ENCODE measurements at regions of chr17 and their contacts with region 1.

Region 1: DNA sequence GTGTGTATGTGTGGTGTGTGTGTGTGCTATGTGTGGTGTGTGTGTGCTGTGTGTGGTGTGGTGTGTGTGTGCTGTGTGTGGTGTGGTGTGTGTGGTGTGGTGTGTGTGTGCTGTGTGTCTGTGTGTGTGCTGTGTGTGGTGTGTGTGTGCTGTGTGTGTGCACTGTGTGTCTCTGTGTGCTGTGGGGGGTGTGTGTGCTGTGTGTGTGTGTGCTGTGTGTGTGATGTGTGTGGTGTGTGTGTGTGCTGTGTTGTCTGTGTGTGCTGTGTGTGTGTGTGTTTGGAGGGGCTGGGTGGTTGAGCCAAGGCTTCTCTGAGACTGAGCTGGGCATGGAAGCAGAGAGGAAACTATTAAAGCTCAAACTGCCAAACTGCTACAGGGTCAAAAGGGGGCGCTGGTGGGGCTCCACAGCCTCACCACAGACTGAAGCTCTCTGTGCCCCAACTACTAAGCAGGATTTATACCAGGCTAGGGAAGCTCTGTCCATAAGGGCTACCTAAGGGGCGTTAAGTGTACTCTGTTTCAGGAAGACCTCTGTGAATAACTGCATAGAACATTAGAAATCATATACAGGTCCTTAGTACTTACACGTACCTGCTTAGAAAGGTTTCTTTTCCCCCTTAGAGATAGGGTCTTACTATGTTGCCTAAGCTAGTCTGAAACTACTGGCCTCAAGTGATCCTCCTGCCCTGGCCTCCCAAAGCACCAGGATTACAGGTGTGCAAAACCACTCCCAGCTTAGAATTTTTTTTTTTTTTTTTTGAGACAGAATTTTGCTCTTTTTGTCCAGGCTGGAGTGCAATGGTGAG is 27.8 kb upstream of the GHDC start:
- DNase-seq: peak; percentile 69
- H3K4me3 Mint-ChIP-seq: no peak overlapping the region
- H3K27ac Mint-ChIP-seq: no peak overlapping the region
- H3K4me1 Mint-ChIP-seq: no peaks in the 10 kb centered on the region
- H3K27me3 Mint-ChIP-seq: no peaks in the 10 kb centered on the region

Region 2: DNA sequence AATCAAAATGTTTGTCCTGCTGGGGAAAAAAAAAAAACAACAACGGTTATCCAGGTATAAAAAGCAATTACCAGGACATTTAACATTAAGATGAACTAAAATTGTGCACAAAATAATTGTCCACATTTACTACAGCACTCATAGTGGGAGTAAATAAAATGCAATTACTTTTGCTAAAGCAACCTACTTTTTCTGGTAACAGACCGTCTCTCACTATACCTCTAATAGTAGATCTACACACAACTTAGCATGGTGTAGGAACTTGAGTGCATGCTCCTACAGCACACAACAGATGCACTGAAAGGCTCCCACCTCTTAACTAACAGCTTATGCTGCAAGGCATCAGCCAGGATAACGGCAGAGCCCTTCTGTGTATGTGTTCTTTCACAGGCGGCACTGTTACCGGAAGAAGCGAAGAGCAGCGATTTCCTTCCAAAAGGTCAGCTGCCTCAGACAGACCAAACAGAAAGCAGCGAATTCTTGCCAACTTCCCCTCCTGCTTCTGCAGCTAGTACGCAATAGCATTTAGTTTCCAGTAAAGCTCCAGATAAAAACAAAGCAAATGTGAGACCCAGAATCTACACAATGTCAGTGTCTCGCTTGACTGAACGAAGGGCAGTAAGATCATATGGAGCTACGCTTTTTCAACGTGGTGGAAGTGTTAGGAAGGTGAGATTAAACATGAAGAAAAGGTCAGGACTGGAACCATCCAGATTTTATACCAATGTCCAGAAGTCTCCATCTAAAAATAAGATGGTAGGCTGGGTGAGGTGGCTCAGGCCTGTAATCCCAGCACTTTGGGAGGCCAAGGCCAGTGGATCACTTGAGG is 26.4 kb after region 1 on chr17:
- CTCF ChIA-PET with region 1: interaction called, 37 read pairs
- DNase-seq: peak; percentile 86
- H3K4me3 Mint-ChIP-seq: peak overlapping the region; percentile 82
- H3K27ac Mint-ChIP-seq: peak overlapping the region; percentile 97
- H3K4me1 Mint-ChIP-seq: peaks cover 69% of the 10 kb centered on the region
- H3K27me3 Mint-ChIP-seq: no peaks in the 10 kb centered on the region

Region 3: DNA sequence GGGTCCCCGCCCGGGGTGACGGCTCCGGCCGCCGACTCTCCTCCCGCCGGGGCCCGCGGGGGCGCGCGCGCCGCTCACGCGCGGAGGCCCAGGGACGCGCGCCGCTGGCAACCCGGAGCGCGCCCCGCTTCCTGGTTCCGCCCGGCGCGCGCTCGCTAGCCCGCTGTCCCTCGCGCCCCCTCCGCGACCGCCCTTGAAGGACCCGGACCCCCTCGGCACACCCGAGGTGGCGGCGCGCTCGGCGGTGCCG is 54.1 kb after region 1 on chr17 and contains the start of gene STAT5B:
- CTCF ChIA-PET with region 1: interaction called, 19 read pairs
- DNase-seq: peak; percentile 79
- H3K4me3 Mint-ChIP-seq: peak within 1 kb of the TSS; percentile 95
- H3K27ac Mint-ChIP-seq: peak within 1 kb of the TSS; percentile 91
- H3K4me1 Mint-ChIP-seq: peaks cover 45% of the 10 kb centered on the region
- H3K27me3 Mint-ChIP-seq: no peaks in the 10 kb centered on the region

Region 4: GRCh38 chr17:42294469-42295398 is 72.6 kb after region 1 on chr17:
- CTCF ChIA-PET with region 1: interaction called, 29 read pairs
- DNase-seq: no peak
- H3K4me3 Mint-ChIP-seq: no peak overlapping the region
- H3K27ac Mint-ChIP-seq: peak overlapping the region; percentile 53
- H3K4me1 Mint-ChIP-seq: peaks cover 24% of the 10 kb centered on the region
- H3K27me3 Mint-ChIP-seq: no peaks in the 10 kb centered on the region

Region 5: DNA sequence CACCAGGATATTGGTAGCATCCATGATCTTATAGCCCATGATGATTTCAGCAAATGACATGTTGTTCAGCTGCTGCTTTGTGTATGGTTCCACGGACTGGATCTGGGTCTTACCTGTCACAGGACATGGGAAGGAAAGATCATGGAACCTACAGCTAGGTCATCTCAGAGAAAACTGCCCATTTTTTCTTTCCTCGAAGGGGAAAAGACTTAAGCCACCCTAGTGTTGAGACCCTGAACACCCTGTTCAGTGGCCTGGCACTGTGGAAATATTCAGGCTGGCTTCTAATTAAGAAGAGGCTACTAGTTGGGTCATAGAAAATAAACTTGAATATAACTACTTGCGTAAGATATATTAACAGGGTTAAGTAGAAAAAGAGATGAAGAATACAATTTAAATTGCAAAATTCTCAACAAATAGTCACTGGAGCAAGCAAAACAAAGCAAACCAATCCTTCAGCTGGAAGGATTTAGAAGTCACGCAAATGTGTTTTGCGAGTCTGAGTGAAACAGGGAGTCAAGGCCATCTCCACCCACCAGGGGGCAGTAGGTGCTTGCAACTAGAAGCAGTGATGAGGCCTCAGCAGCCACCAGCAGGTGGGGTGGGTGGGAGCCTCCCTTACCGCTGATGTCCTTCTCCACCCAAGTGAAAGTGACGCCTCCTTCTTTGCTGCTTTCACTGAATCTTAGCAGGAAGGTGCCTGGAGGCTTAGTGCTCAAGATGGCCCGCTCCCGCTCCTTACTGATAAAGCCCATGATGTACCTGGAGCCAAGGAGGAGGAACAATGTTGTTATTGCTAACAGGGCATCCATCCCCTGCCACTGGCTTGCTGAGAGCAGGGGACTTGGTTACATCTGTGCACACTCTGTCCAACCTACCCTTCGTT is 100.5 kb after region 1 on chr17:
- CTCF ChIA-PET with region 1: interaction called, 23 read pairs
- DNase-seq: peak; percentile 98
- H3K4me3 Mint-ChIP-seq: no peak overlapping the region
- H3K27ac Mint-ChIP-seq: peak overlapping the region; percentile 78
- H3K4me1 Mint-ChIP-seq: peaks cover 51% of the 10 kb centered on the region
- H3K27me3 Mint-ChIP-seq: no peaks in the 10 kb centered on the region

Region 6: DNA sequence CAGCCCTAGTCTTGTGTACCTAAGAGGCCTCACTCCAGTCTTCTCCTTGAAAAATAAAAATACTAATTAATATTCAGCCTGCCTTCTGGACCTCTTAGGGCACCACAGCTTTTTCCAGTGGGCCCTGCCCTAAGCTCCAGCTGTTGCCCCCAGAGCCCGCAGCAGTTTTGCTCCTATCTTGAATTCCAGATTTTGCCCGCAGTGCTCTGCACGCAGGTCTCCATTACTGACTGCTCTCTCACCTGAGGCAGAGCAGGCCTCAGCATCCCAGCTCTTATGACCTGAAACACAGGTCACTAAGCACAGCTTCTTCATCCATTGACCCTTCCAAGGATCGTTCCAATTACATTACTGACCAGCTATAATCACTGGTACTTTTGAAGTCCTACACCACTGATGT is 285.5 kb after region 1 on chr17:
- CTCF ChIA-PET with region 1: no interaction called
- DNase-seq: no peak
- H3K4me3 Mint-ChIP-seq: no peak overlapping the region
- H3K27ac Mint-ChIP-seq: no peak overlapping the region
- H3K4me1 Mint-ChIP-seq: peaks cover 9% of the 10 kb centered on the region
- H3K27me3 Mint-ChIP-seq: peaks cover 25% of the 10 kb centered on the region

Measured in activated naive CD4-positive, alpha-beta T cell treated with anti-CD3 and anti-CD28 coated beads, Interleukin-2, amount 10 ng/mL, durations not matched to agents 7 days and 5 days (primary cell).